ENCODE measurements at regions of chr15 and their contacts with region 1.

Region 1: GRCh38 chr15:43903864-43904290 is 77.1 kb downstream of the WDR76 start:
- DNase-seq: peak; percentile 83
- ATAC-seq: peak; percentile 96
- H3K4me3 Mint-ChIP-seq: no peak overlapping the region
- H3K27ac Mint-ChIP-seq: no peak overlapping the region; the same call in 1 of the 2 replicates
- H3K4me1 Mint-ChIP-seq: peaks cover 17% of the 10 kb centered on the region
- H3K27me3 Mint-ChIP-seq: no peaks in the 10 kb centered on the region
- CTCF ChIP-seq: peak; percentile 91

Region 2: DNA sequence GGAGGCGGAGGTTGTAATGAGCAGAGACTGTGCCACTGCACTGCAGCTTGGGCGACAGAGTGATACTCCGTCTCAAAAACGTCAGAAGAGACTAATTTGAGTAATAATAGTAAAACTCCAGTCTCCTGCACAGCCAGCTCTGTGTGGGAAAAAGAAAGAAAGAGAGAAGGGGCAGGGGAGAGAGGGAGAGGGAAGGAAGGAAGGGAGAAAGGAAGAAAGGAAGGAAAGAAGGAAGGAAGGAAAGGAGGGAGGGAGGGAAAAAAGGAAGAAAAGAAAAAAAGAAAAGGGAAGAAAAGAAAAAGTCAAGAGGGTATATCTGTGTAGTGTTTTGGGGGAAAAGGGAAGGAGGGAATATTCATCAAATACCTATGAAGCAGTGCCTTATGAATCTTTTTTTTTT is 180.7 kb before region 1 on chr15:
- CTCF ChIA-PET with region 1: no interaction called
- POLR2A ChIA-PET with region 1: no interaction called
- DNase-seq: no peak
- ATAC-seq: no peak
- H3K4me3 Mint-ChIP-seq: no peak overlapping the region
- H3K27ac Mint-ChIP-seq: no peak overlapping the region
- H3K4me1 Mint-ChIP-seq: no peaks in the 10 kb centered on the region
- H3K27me3 Mint-ChIP-seq: no peaks in the 10 kb centered on the region
- CTCF ChIP-seq: no peak

Region 3: DNA sequence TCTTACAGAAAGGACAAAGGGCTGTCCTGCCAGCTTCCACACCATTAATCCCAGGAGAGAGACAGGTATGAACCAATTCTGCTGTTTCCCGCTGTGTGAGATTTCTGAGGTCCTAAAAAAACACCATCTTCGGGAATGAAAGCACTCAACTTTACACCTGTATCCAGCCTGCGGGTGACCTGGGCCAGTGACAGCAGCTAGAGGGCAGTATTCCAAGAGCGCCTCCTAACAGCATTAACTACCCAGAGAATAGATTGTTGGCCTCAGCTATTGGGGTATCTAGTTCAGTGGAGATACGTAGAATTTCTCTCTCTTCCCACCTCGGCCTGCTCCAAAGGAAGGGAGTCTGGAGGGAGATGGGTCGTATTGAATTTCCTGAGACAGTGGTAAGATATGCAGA is 21.9 kb before region 1 on chr15:
- CTCF ChIA-PET with region 1: interaction called, 28 read pairs
- POLR2A ChIA-PET with region 1: no interaction called
- DNase-seq: peak; percentile 67
- ATAC-seq: peak; percentile 89
- H3K4me3 Mint-ChIP-seq: no peak overlapping the region
- H3K27ac Mint-ChIP-seq: peak overlapping the region; percentile 7; the same call in 1 of the 2 replicates
- H3K4me1 Mint-ChIP-seq: peaks cover 16% of the 10 kb centered on the region
- H3K27me3 Mint-ChIP-seq: no peaks in the 10 kb centered on the region
- CTCF ChIP-seq: peak; percentile 50

Region 4: DNA sequence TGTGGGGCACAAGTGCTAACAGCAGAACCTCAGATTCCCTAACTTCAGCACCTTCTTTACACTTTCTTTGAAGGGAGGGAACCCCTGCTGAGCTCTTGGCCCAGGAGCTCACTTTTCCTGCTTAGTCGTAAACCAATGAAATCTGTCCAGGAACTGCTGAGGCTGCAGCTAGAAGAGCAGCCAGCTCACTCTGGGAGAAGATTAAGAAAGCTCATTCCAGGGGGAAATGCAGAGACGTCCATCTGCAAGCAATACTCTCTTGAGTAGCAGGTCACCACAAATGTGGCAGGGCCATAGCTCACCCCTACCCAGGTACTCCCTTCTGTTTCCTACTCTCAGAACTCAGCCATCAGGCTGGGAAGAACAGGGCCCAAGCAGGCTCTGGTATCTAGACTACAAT is 26.2 kb after region 1 on chr15:
- CTCF ChIA-PET with region 1: interaction called, 39 read pairs
- POLR2A ChIA-PET with region 1: no interaction called
- DNase-seq: peak; percentile 41
- ATAC-seq: peak; percentile 6
- H3K4me3 Mint-ChIP-seq: no peak overlapping the region
- H3K27ac Mint-ChIP-seq: peak overlapping the region; percentile 54
- H3K4me1 Mint-ChIP-seq: peaks cover 85% of the 10 kb centered on the region
- H3K27me3 Mint-ChIP-seq: no peaks in the 10 kb centered on the region
- CTCF ChIP-seq: no peak

Region 5: GRCh38 chr15:43939070-43939469 is 35.2 kb after region 1 on chr15:
- CTCF ChIA-PET with region 1: interaction called, 15 read pairs
- POLR2A ChIA-PET with region 1: no interaction called
- DNase-seq: no peak
- ATAC-seq: peak; percentile 58
- H3K4me3 Mint-ChIP-seq: no peak overlapping the region
- H3K27ac Mint-ChIP-seq: no peak overlapping the region
- H3K4me1 Mint-ChIP-seq: peaks cover 14% of the 10 kb centered on the region
- H3K27me3 Mint-ChIP-seq: no peaks in the 10 kb centered on the region
- CTCF ChIP-seq: peak; percentile 20; the same call in 1 of the 2 replicates

Region 6: GRCh38 chr15:44023176-44023575 is 119.3 kb after region 1 on chr15:
- CTCF ChIA-PET with region 1: interaction called, 10 read pairs
- POLR2A ChIA-PET with region 1: no interaction called
- DNase-seq: no peak
- ATAC-seq: no peak
- H3K4me3 Mint-ChIP-seq: no peak overlapping the region
- H3K27ac Mint-ChIP-seq: no peak overlapping the region
- H3K4me1 Mint-ChIP-seq: peaks cover under 1% of the 10 kb centered on the region
- H3K27me3 Mint-ChIP-seq: no peaks in the 10 kb centered on the region
- CTCF ChIP-seq: no peak

Region 7: DNA sequence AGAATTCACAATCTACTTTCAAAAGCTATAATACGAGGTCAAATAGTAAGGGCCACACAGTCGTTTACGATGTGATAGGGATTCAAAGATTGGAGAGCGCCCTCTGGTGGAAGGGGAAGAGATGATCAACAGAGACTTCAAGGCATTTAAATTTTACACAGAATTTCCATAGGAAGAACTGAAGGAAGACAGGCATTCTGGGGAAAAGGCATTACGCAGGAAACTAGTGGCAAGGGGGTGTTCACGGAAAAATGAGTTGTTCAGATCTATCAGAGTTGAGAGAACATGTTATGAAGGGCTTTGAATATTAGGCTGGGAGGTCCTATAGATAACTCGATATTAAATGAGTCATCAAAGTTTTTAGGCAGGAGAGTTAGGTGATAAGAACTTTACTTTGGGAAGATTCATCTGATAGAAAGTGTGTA is 162.5 kb after region 1 on chr15:
- CTCF ChIA-PET with region 1: interaction called, 66 read pairs
- POLR2A ChIA-PET with region 1: no interaction called
- DNase-seq: peak; percentile 63
- ATAC-seq: peak; percentile 86
- H3K4me3 Mint-ChIP-seq: no peak overlapping the region
- H3K27ac Mint-ChIP-seq: peak overlapping the region; percentile 38; the same call in 1 of the 2 replicates
- H3K4me1 Mint-ChIP-seq: peaks cover 7% of the 10 kb centered on the region
- H3K27me3 Mint-ChIP-seq: no peaks in the 10 kb centered on the region
- CTCF ChIP-seq: peak; percentile 85

Region 8: DNA sequence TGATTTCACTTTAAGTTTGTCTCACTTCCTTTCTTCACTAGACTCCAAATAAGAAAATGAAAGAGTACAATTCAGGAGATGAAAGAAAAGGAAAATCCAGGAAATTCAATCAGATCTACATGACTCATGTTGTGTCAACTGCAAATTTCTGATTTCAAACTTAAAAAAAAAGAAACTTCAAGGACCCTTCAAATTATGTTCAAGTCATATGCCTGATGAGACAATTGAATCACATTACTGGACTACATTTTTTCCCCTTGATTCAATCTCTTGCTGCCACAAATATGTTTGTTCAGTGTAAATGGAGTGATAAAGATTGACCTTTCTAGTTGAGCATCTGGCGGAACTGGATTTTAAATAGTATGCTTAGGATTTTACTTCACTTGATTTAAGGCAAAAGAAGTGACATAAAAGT is 253.8 kb after region 1 on chr15:
- CTCF ChIA-PET with region 1: no interaction called
- POLR2A ChIA-PET with region 1: no interaction called
- DNase-seq: no peak
- ATAC-seq: no peak
- H3K4me3 Mint-ChIP-seq: no peak overlapping the region
- H3K27ac Mint-ChIP-seq: no peak overlapping the region
- H3K4me1 Mint-ChIP-seq: peaks cover 3% of the 10 kb centered on the region
- H3K27me3 Mint-ChIP-seq: no peaks in the 10 kb centered on the region
- CTCF ChIP-seq: no peak

Measured in WTC11 (cell line).